SK-N-SH (cell line): ENCODE measurements at regions of chr11 and their contacts with region 1.

Region 1: DNA sequence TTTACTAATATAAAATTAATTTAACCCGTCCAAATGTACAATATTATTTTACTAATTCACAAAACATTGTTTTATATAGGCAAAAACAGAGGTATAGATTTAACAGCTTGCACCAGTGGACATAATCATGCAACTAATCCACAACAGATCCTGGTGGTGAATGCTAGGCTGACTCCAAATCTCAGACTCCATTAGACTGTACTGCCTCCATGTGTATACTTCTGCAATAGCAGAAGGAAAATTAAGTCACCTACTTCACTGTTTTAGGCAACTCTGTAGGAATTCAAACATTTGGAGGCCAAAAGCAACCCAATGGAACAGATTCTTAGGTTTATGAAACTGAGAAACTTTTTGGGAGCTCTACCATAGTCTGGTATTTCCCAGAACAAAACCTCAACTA is 30.0 kb upstream of the RAB39A start:
- DNase-seq: peak; percentile 43
- H3K4me3 ChIP-seq: no peak overlapping the region
- H3K27ac ChIP-seq: no peak overlapping the region
- H3K4me1 ChIP-seq: no peaks in the 10 kb centered on the region
- H3K27me3 ChIP-seq: no peaks in the 10 kb centered on the region; the same call in 1 of the 2 replicates
- CTCF ChIP-seq: peak; percentile 63
- EP300 ChIP-seq: no peak
- RAD21 ChIP-seq: peak; percentile 77

Region 2: DNA sequence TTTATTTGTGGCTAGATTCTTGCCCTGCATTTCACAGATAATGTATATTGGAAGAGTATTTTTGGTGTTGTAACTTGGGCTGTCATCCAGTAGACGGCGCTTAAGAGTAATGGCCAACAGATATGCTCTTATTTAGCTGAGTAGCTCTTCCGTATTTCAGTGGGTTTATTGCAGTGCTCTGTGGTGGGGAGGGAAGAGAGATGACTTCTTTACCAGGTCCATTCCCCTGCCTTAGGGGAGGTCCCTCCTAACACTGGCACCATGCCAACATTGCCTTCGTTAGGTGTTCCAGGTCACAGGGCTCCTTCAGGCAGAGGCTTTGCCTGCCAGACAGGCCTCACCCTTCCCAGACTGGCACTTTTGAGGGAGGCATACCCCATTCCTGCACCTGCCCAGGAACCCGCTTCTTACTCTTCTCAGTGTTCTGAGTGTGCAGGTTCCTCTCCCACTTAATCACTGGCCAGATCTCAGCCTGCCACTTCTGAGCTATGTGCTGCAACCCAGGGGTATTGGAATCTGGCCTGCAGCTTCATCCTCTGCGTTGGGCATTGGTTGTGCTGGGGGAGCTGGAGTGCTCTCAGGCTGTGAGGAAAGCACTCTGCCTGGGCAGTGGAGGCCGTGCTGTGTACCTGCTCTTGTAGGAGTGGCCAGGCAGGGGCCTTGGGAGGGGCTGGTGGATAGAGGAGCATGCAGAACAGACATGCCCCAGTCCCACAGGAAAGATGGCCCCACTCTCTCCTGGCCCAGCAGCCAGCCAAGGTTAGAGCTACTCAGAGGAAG is 157.0 kb before region 1 on chr11:
- CTCF ChIA-PET with region 1: interaction called, 10 read pairs
- POLR2A ChIA-PET with region 1: no interaction called
- DNase-seq: peak; percentile 33
- H3K4me3 ChIP-seq: no peak overlapping the region; a peak in 1 of 4 replicates
- H3K27ac ChIP-seq: no peak overlapping the region
- H3K4me1 ChIP-seq: no peaks in the 10 kb centered on the region; a peak in 1 of 4 replicates
- H3K27me3 ChIP-seq: no peaks in the 10 kb centered on the region
- CTCF ChIP-seq: peak; percentile 55
- EP300 ChIP-seq: no peak
- RAD21 ChIP-seq: peak; percentile 59

Region 3: GRCh38 chr11:107785401-107785800 is 112.9 kb before region 1 on chr11:
- CTCF ChIA-PET with region 1: no interaction called
- POLR2A ChIA-PET with region 1: no interaction called
- DNase-seq: no peak
- H3K4me3 ChIP-seq: no peak overlapping the region
- H3K27ac ChIP-seq: no peak overlapping the region
- H3K4me1 ChIP-seq: no peaks in the 10 kb centered on the region
- H3K27me3 ChIP-seq: no peaks in the 10 kb centered on the region
- CTCF ChIP-seq: no peak
- EP300 ChIP-seq: no peak
- RAD21 ChIP-seq: no peak

Region 4: GRCh38 chr11:107962181-107962580 is 63.9 kb after region 1 on chr11:
- CTCF ChIA-PET with region 1: no interaction called
- POLR2A ChIA-PET with region 1: no interaction called
- DNase-seq: no peak
- H3K4me3 ChIP-seq: no peak overlapping the region
- H3K27ac ChIP-seq: no peak overlapping the region
- H3K4me1 ChIP-seq: peaks cover 6 to 17% of the 10 kb centered on the region in 2 experiments; a peak in 2 of 4 replicates
- H3K27me3 ChIP-seq: no peaks in the 10 kb centered on the region
- CTCF ChIP-seq: no peak
- EP300 ChIP-seq: no peak
- RAD21 ChIP-seq: no peak